Psoas muscle (tissue), 8 donors: ENCODE measurements at regions of chr7 and their contacts with region 1.

Region 1: DNA sequence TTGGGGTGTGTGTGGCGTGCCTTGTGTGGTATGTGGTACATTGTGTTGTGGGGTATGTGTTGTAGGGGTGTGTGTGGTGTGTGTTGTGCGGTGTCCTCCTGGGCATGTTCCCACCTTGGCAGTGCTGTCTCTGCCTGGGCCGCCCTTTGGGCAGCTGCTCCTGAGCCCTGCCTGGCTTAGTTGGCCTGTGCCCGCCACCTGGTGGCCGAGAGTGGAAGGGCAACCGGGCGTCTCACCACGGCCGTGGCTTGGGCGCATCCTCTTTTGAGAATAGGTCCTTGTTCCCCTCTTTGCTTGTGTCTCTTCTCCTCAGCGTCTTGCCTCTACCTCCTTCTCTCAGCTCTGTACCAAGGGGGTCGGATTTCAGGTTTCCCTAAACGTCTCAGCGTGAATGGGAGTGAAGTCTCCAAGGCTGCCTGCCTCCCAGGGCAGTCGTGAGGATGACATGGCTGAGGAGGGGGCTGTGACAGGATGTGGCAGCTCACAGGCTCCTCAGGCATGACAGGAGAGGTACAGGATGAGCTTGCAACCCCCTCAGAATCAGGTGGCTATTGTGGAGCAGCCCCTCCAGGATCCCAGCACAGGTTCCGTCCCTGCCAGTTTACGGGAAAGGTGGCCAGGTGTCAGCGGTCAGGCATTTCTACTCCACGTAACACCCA is 98.4 kb upstream of the PODXL start:
- DNase-seq: peak; percentile 87 to 94
- ATAC-seq: peak; percentile 94 to 97 (median 95)
- H3K4me3 ChIP-seq: no peak overlapping the region
- H3K27ac ChIP-seq: no peak overlapping the region
- H3K4me1 ChIP-seq: no peaks in the 10 kb centered on the region
- H3K27me3 ChIP-seq: no peaks in the 10 kb centered on the region
- CTCF ChIP-seq: peak; percentile 93

Region 2: DNA sequence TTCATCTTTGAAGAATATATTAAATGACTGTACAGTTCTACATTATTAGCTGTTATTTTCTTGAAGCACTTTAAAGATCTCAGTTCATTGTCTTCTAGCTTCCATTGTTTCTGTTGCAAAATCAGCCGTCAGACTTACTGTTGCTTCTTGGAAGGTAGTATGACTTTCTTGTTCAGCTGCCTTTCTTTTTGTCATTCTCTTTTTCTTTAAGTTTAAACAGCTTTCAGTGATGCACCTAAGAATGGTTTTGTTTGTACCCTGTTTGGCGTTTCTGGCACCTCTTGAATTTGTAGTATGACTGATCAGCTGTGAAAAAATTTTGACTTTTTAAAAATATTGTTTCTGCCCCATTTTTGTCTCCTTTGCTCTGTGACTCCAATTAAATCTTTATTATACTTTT is 317.8 kb before region 1 on chr7:
- intact Hi-C with region 1: no loop called
- DNase-seq: no peak
- ATAC-seq: no peak
- H3K4me3 ChIP-seq: no peak overlapping the region
- H3K27ac ChIP-seq: no peak overlapping the region
- H3K4me1 ChIP-seq: peaks cover 47% of the 10 kb centered on the region
- H3K27me3 ChIP-seq: no peaks in the 10 kb centered on the region
- CTCF ChIP-seq: no peak

Region 3: DNA sequence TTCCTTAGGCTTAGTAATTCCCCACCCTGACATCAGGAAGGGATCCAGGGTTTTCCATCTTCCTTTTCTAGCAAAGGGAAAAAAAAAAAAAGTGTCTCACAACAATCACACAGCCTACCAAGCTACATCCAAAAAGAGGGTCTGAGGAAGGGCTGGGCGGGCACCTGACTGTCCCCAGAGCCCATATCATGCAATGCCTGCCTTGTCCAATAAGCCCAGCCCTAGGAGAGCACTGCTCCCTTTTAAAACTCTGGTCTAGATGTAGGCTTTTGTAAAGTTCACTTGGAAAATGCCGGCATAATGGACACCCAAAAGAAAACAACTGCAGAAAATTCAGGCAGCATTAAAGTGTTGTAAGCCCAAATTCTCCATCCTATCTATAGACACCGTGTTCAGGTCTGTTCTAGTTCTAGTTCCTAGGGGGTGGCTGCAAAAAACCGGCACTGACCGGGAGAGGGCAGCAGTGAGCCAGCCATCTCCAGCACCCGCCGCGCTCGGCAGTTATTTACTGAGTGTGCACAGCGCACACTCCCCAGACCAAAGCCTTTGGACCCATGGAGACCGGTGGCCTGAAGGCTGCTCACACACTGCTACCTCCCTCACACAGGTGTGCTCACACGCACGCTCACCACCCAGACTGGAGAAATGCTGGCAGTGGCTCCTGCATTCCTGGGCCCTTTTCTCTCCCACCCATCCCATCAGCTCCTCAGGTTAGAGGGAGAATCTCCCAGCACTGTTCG is 147.0 kb before region 1 on chr7:
- intact Hi-C with region 1: loop called (anchors 1 to 2 kb)
- DNase-seq: peak; percentile 84 to 92
- ATAC-seq: peak; percentile 81 to 85 (median 82)
- H3K4me3 ChIP-seq: no peak overlapping the region
- H3K27ac ChIP-seq: no peak overlapping the region
- H3K4me1 ChIP-seq: peaks cover 25% of the 10 kb centered on the region
- H3K27me3 ChIP-seq: no peaks in the 10 kb centered on the region
- CTCF ChIP-seq: peak; percentile 96

Region 4: GRCh38 chr7:131521651-131522163 is 133.1 kb before region 1 on chr7:
- intact Hi-C with region 1: no loop called
- DNase-seq: no peak
- ATAC-seq: peak; percentile 32 to 59 (median 42)
- H3K4me3 ChIP-seq: no peak overlapping the region
- H3K27ac ChIP-seq: peak overlapping the region; percentile 56
- H3K4me1 ChIP-seq: peaks cover 3% of the 10 kb centered on the region
- H3K27me3 ChIP-seq: no peaks in the 10 kb centered on the region
- CTCF ChIP-seq: no peak

Region 5: DNA sequence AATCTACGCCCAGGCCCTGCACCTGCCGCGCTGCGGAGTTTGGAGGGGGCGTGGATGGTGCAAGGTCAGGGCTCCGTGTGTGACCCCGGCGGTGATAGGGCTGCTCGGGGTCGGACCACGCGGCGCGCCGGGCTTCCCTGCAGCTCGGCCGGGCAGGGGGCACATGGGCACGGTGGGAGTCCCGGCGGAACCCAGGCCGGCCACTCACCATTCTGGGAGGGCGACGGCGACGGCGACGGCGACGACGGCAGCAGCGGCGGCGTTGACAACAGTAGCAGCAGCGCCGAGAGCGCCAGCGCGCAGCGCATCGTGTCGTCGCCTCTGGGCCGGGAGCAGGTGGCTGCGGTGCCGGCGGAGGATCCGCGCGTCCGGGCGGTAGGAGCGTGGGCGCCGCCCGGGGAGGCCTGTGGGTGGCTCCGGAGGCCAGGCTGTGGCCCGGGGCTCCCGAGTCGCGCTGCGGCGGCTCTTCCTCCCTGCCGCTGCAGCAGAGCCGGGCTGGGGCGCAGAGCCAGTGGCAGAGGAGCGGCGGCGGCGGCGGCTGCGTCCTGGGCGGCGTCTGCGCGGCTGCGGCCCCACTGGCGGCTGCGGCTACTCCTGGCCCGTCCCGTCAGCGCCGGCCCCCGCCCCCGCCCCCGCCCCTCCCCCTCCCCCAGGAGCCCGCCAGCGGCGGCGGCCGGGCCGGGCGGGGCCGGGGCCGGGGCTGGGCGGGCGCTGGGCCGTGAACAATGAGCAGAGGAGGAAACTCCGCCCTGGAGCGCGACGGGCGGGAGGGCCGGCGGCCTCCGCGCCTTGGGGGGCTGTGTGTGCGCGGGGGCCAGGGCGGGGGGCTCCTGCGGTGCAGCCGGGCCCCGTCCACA is 98.5 kb before region 1 on chr7 and contains the start of gene PODXL:
- intact Hi-C with region 1: loop called (anchors 5 kb)
- DNase-seq: peak; percentile 80 to 89
- ATAC-seq: peak; percentile 78 to 88 (median 84)
- H3K4me3 ChIP-seq: peak within 1 kb of the TSS; percentile 79
- H3K27ac ChIP-seq: peak within 1 kb of the TSS; percentile 77
- H3K4me1 ChIP-seq: peaks cover 12% of the 10 kb centered on the region
- H3K27me3 ChIP-seq: peaks cover 0 to 6% (median 0%) of the 10 kb centered on the region in 3 donors
- CTCF ChIP-seq: no peak
- total RNA-seq, gene PODXL: 16.2 to 46.8 (median 21.8) TPM

Region 6: GRCh38 chr7:131619336-131620305 is 35.2 kb before region 1 on chr7:
- intact Hi-C with region 1: loop called in 1 of 2 experiments (anchors 5 kb)
- DNase-seq: no peak
- ATAC-seq: no peak
- H3K4me3 ChIP-seq: no peak overlapping the region
- H3K27ac ChIP-seq: no peak overlapping the region
- H3K4me1 ChIP-seq: no peaks in the 10 kb centered on the region
- H3K27me3 ChIP-seq: no peaks in the 10 kb centered on the region
- CTCF ChIP-seq: no peak